ENCODE measurements at regions of chr1 and their contacts with region 1.

Region 1: GRCh38 chr1:212558693-212559480 is 49.7 kb upstream of the ATF3 start:
- DNase-seq: peak; percentile 85 to 98 (median 90)
- ATAC-seq: peak; percentile 93
- H3K4me3 ChIP-seq: peak overlapping the region; percentile 72
- H3K4me3 Mint-ChIP-seq: peak overlapping the region; percentile 88
- H3K27ac ChIP-seq: peak overlapping the region; percentile 77 to 81
- H3K27ac Mint-ChIP-seq: peak overlapping the region; percentile 85
- H3K4me1 ChIP-seq: peaks cover 16% of the 10 kb centered on the region
- H3K4me1 Mint-ChIP-seq: peaks cover 6% of the 10 kb centered on the region
- H3K27me3 ChIP-seq: no peaks in the 10 kb centered on the region
- H3K27me3 Mint-ChIP-seq: no peaks in the 10 kb centered on the region
- CTCF ChIP-seq: no peak

Region 2: GRCh38 chr1:211675230-211676105 is 883.4 kb before region 1 on chr1 and contains the start of gene NEK2:
- CTCF ChIA-PET with region 1: no interaction called
- POLR2A ChIA-PET with region 1: no interaction called
- intact Hi-C with region 1: loop called in 1 of 2 experiments (anchors 10 kb)
- DNase-seq: peak; percentile 70 to 93 (median 79)
- ATAC-seq: peak; percentile 94
- H3K4me3 ChIP-seq: peak within 1 kb of the TSS; percentile 67
- H3K4me3 Mint-ChIP-seq: peak within 1 kb of the TSS; percentile 92
- H3K27ac ChIP-seq: no peak within 1 kb of the TSS
- H3K27ac Mint-ChIP-seq: peak within 1 kb of the TSS; percentile 73
- H3K4me1 ChIP-seq: peaks cover 15% of the 10 kb centered on the region
- H3K4me1 Mint-ChIP-seq: peaks cover 7% of the 10 kb centered on the region
- H3K27me3 ChIP-seq: no peaks in the 10 kb centered on the region
- H3K27me3 Mint-ChIP-seq: no peaks in the 10 kb centered on the region
- CTCF ChIP-seq: no peak
- total RNA-seq, gene NEK2: not detected

Region 3: DNA sequence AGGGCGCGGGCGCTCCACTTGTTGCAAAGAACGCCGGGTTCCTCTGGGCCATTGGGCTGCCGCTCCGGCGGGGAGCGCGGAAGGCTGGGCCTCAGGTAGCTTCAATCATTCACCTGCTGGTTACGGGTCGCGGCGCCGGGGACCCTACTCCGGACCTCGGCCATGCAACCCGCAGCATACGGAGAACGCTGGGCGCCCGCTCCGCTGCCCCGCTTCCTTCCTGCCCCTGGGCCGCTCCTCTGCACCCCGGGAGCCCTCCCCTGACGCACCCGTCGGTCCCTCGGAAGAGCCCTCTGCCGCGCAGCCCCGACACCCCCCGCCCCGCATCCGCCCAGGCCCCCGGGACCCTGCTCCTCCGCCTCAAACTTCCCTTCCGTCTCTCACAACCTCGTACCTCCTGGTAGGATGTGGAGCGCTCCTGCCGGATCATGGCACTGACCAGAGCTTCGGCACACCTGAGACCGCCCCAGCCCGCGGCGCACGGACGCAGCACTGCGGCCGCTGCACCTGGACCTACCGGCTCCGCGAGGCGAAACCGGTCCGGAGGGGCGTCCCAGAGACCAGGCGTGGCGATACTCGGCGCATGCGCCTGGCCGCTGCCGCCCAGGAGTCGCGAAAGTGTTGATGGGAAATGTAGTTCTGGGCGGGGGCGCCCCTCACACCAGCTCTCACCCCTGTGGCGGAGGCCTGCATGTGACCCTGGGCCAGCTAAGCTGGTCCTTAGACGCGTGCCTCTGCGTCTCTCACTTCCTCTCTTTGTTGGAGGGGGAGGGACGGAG is 144.4 kb before region 1 on chr1 and contains the start of gene PACC1:
- CTCF ChIA-PET with region 1: no interaction called
- POLR2A ChIA-PET with region 1: no interaction called
- intact Hi-C with region 1: loop called in 1 of 2 experiments (anchors 5 kb)
- DNase-seq: peak; percentile 70 to 95 (median 81)
- ATAC-seq: peak; percentile 85
- H3K4me3 ChIP-seq: peak within 1 kb of the TSS; percentile 76
- H3K4me3 Mint-ChIP-seq: peak within 1 kb of the TSS; percentile 89
- H3K27ac ChIP-seq: peak within 1 kb of the TSS; percentile 40 to 72
- H3K27ac Mint-ChIP-seq: peak within 1 kb of the TSS; percentile 82
- H3K4me1 ChIP-seq: peaks cover 30% of the 10 kb centered on the region
- H3K4me1 Mint-ChIP-seq: peaks cover 22% of the 10 kb centered on the region
- H3K27me3 ChIP-seq: no peaks in the 10 kb centered on the region
- H3K27me3 Mint-ChIP-seq: no peaks in the 10 kb centered on the region
- CTCF ChIP-seq: no peak
- total RNA-seq, gene PACC1: 1.8 to 2.1 TPM

Region 4: DNA sequence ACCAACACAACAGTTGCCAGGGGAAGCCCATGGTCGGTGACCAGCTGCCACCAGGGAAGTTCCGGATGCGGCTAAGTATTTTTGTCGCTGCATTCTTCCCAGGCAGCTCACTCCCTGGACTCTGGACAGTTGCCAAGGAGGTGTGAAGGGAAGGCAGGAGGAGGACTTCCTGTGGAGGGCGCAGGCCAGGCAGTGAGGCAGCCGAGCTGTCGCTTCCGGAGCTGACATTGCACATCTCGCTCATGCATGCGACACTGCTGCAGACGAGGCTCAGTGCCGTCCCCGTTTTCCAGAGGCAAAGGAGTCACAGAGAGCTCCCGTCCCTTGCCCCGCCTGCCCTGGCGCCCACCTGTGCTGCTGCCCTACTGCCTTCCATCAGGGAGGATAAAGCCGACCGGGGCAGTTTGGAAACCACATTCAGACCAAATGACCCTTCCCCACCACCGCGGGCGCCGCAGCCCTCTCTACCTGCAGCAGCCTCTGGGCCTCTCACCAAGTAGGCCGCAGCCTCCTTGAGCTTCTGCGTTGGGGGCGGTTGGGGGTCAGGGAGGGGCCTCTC is 44.8 kb before region 1 on chr1:
- CTCF ChIA-PET with region 1: no interaction called
- POLR2A ChIA-PET with region 1: no interaction called
- intact Hi-C with region 1: no loop called
- DNase-seq: peak in 5 of 14 experiments; percentile 7 to 45 (median 30)
- ATAC-seq: peak; percentile 34
- H3K4me3 ChIP-seq: no peak overlapping the region
- H3K4me3 Mint-ChIP-seq: no peak overlapping the region
- H3K27ac ChIP-seq: no peak overlapping the region
- H3K27ac Mint-ChIP-seq: no peak overlapping the region
- H3K4me1 ChIP-seq: peaks cover 12% of the 10 kb centered on the region
- H3K4me1 Mint-ChIP-seq: no peaks in the 10 kb centered on the region
- H3K27me3 ChIP-seq: peaks cover 27 to 45% of the 10 kb centered on the region in 2 experiments
- H3K27me3 Mint-ChIP-seq: peaks cover 69% of the 10 kb centered on the region
- CTCF ChIP-seq: no peak

Region 5: GRCh38 chr1:212595787-212596714 is 37.2 kb after region 1 on chr1:
- CTCF ChIA-PET with region 1: interaction called, 3 read pairs
- POLR2A ChIA-PET with region 1: interaction called, 7 read pairs
- intact Hi-C with region 1: loop called in 1 of 2 experiments (anchors 5 kb)
- DNase-seq: peak in 5 of 14 experiments; percentile 12 to 88 (median 74)
- ATAC-seq: peak; percentile 94
- H3K4me3 ChIP-seq: peak overlapping the region; percentile 34
- H3K4me3 Mint-ChIP-seq: peak overlapping the region; percentile 81
- H3K27ac ChIP-seq: peak overlapping the region in 1 of 2 donors; percentile 47
- H3K27ac Mint-ChIP-seq: peak overlapping the region; percentile 75
- H3K4me1 ChIP-seq: peaks cover 12% of the 10 kb centered on the region
- H3K4me1 Mint-ChIP-seq: peaks cover 12% of the 10 kb centered on the region
- H3K27me3 ChIP-seq: no peaks in the 10 kb centered on the region
- H3K27me3 Mint-ChIP-seq: peaks cover 25% of the 10 kb centered on the region
- CTCF ChIP-seq: peak; percentile 28

Region 6: DNA sequence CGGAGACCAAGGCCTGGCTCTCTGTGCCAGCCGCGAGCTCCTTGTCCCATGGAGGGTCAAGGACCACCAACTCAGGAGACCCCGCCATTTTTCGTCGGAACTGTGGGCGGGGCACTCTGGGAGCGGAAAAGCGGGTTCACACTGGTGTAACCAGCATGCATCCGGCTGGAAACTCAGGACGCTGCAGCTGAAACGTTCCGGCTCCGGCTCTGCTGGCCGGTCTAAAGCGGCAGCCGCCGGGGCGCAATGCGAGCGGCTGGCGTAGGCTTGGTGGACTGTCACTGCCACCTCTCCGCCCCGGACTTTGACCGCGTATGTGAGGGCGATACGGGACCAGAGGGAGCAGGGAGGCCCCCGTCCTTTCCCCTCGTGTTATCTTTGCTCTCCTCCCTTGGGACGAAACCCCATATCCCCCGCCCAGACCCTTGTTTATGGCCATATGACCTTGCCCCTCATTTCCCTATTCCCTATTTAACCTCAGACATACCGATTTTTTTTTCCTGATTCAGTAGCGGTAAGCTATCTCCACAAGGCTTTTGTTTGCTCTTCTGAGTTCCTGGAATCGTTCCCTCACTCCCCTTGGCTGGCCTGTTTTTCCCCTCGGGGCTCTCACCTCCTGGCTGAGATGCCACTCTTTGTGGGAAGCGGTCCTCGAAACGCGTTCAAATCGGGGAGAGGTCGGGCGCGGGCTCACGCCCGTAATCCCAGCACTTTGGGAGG is 232.9 kb after region 1 on chr1 and contains the starts of genes NSL1 and TATDN3:
- CTCF ChIA-PET with region 1: no interaction called
- POLR2A ChIA-PET with region 1: no interaction called
- intact Hi-C with region 1: loop called in 1 of 2 experiments (anchors 5 kb)
- DNase-seq: peak; percentile 84 to 98 (median 94)
- ATAC-seq: peak; percentile 87
- H3K4me3 ChIP-seq: peak within 1 kb of the TSS; percentile 71
- H3K4me3 Mint-ChIP-seq: peak within 1 kb of the TSS; percentile 96
- H3K27ac ChIP-seq: peak within 1 kb of the TSS; percentile 73 to 77
- H3K27ac Mint-ChIP-seq: peak within 1 kb of the TSS; percentile 90
- H3K4me1 ChIP-seq: peaks cover 31% of the 10 kb centered on the region
- H3K4me1 Mint-ChIP-seq: peaks cover 41% of the 10 kb centered on the region
- H3K27me3 ChIP-seq: no peaks in the 10 kb centered on the region
- H3K27me3 Mint-ChIP-seq: peaks cover 4% of the 10 kb centered on the region
- CTCF ChIP-seq: no peak
- total RNA-seq, gene NSL1: 14.1 to 15.7 TPM
- total RNA-seq, gene TATDN3: 12.2 to 13.8 TPM

Region 7: GRCh38 chr1:213015099-213016050 is 456.5 kb after region 1 on chr1 and contains the start of gene ANGEL2:
- CTCF ChIA-PET with region 1: no interaction called
- POLR2A ChIA-PET with region 1: interaction called, 4 read pairs
- intact Hi-C with region 1: loop called in 1 of 2 experiments (anchors 5 kb)
- DNase-seq: peak; percentile 88 to 99 (median 94)
- ATAC-seq: peak; percentile 98
- H3K4me3 ChIP-seq: peak within 1 kb of the TSS; percentile 72
- H3K4me3 Mint-ChIP-seq: peak within 1 kb of the TSS; percentile 99
- H3K27ac ChIP-seq: peak within 1 kb of the TSS; percentile 75 to 86
- H3K27ac Mint-ChIP-seq: peak within 1 kb of the TSS; percentile 96
- H3K4me1 ChIP-seq: peaks cover 12% of the 10 kb centered on the region
- H3K4me1 Mint-ChIP-seq: peaks cover 44% of the 10 kb centered on the region
- H3K27me3 ChIP-seq: no peaks in the 10 kb centered on the region
- H3K27me3 Mint-ChIP-seq: no peaks in the 10 kb centered on the region
- CTCF ChIP-seq: no peak
- total RNA-seq, gene ANGEL2: 53.0 to 56.2 TPM